ENCODE measurements at regions of chr6 and their contacts with region 1.

Region 1: DNA sequence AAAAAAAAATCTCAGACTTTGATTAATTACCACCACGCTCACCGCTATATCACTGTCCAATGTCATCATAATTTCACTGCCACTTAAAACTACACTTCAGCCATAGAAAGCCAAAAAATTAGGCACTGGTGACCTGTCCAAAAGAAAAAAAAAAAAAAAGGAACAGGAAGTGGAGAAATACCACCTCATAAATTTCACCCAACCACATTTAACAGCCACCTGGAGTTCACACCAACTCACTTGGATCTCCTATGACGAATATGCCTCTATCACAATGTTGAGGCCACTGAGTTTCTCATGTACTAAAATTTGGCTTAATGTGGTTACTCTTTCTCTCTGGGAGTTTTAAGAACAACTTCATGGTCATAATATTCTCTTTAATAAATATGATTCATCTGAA is 237.5 kb upstream of the RSPO3 start:
- DNase-seq: no peak

Region 2: DNA sequence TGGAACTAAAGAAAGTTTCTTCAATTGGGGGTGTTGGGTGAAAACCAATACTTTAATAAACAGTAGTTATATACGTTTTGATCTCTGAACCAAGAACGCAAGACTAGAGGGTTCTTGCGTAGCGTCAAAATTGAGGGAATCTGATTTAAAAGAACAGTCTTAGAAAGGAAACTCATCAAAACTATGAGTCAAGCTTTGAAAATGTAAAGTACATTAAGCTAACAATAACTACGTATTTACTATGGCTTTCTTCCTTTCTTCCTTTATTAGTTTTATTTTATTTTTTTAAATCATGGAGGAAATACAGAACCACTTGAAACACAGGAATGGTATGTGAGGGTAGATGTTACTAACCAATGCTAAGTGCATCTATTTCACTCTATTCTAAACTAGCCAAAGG is 49.5 kb before region 1 on chr6:
- intact Hi-C with region 1: loop called in 1 of 2 experiments (anchors 2 kb)
- DNase-seq: no peak

Region 3: GRCh38 chr6:126867641-126868040 is 13.3 kb before region 1 on chr6:
- intact Hi-C with region 1: no loop called
- DNase-seq: no peak

Measured in posterior vena cava (tissue), 2 donors.